ENCODE measurements at regions of chr1 and their contacts with region 1.

Region 1: DNA sequence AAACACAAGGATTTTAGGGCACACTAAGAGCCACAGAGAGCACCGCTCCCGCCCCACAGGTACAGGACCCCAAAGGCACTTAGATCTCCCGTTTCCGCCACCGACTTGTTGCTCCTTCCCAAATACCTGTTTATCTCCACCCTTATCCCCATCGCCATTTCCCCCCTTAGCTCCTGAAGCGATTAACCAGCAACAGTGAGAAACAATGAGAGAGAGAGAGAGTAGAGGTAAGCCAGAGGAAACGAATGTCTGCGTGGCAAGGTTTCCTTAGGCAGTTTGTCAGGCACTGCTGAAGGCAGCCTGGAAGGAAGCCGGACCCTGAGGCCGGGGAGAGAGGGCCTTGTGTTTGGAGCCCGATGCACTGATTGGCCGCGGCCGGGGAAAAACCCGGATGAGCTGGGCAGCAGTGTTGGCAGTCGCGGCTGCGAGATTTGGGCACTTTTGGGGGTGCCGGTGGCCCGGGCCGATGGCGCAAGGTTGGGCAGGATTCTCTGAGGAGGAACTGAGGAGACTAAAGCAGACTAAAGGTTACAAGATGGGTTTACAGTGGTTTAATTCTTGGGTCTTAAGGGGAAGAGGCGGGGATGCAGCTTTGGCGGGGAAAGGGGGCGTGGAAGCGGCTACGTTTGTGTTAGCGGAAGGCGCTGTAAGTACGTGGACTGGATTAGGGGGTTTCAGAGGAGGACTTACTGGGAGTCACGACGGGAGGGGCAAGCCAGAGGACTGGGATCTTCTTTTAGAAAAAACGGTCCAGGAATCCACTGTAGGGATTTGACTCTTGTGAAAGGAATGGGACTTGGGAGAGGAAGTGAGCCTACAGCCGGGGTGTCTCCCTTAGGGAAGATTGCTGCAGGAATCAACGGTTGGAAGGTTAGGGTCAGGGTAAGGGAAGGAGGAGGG is at the start of gene GORAB:
- DNase-seq: peak; percentile 81 to 84
- ATAC-seq: peak; percentile 98 to 99
- H3K4me3 ChIP-seq: peak within 1 kb of the TSS; percentile 68 to 86 (median 78)
- H3K27ac ChIP-seq: peak within 1 kb of the TSS; percentile 78 to 87 (median 82)
- H3K4me1 ChIP-seq: peaks cover 0 to 16% of the 10 kb centered on the region in 2 donors
- H3K27me3 ChIP-seq: no peaks in the 10 kb centered on the region
- CTCF ChIP-seq: no peak
- POLR2A ChIP-seq: peak; percentile 38 to 65
- total RNA-seq, gene GORAB: 1.7 to 3.8 (median 2.3) TPM

Region 2: DNA sequence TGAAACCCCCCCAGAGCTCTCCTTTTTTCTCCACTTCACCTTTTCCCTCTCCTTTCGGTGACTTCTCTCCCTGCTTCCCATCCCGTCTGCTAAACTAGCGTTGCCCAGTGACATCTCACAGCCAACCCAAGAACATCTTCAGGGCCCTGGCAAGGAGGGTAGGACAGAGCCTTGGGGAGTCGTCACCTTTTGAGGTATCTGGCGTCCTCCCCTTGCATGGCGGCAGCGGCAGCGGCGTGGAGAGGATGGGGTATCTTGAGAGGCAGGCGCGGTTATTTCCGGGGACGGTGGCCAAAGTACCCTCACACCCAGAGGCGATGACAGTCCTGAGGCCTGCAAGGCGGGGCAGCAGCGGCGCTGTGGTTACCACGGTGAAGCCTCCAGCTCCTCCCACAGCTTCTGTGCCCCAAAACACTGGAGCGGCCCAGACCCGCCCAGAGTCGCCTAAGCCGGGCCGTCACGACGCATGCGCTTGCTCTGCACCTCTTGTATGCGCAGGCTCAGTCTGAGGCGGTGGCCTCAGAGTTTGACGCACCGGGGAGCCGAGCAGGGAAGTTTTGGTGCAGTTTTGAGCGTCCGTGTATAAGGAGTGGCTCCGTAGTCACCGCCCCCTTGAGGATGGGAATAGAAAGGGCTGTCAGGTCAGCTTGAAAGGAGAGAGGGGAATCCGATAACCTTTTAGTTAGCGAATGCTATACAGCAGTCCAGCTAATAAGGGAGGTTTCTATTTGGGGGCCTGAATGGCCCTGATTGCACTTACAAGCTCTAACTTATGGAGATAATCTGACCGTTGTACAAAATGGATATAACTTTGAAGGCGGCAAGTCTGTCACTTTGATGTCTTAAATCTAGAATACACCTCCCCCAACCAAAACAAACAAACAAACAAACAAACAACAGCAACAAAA is 457.5 kb before region 1 on chr1 and contains the start of gene KIFAP3:
- in situ Hi-C with region 1: no loop called
- intact Hi-C with region 1: loop called (anchors 5 kb)
- DNase-seq: peak; percentile 94 to 96
- ATAC-seq: peak; percentile 98 to 99
- H3K4me3 ChIP-seq: peak within 1 kb of the TSS; percentile 74 to 88 (median 82)
- H3K27ac ChIP-seq: peak within 1 kb of the TSS; percentile 79 to 85 (median 82)
- H3K4me1 ChIP-seq: peaks cover 12 to 23% of the 10 kb centered on the region in 2 donors
- H3K27me3 ChIP-seq: no peaks in the 10 kb centered on the region
- CTCF ChIP-seq: peak; percentile 45 to 68 (median 60)
- POLR2A ChIP-seq: peak; percentile 31 to 68
- total RNA-seq, gene KIFAP3: 15.5 to 25.0 (median 18.0) TPM

Region 3: DNA sequence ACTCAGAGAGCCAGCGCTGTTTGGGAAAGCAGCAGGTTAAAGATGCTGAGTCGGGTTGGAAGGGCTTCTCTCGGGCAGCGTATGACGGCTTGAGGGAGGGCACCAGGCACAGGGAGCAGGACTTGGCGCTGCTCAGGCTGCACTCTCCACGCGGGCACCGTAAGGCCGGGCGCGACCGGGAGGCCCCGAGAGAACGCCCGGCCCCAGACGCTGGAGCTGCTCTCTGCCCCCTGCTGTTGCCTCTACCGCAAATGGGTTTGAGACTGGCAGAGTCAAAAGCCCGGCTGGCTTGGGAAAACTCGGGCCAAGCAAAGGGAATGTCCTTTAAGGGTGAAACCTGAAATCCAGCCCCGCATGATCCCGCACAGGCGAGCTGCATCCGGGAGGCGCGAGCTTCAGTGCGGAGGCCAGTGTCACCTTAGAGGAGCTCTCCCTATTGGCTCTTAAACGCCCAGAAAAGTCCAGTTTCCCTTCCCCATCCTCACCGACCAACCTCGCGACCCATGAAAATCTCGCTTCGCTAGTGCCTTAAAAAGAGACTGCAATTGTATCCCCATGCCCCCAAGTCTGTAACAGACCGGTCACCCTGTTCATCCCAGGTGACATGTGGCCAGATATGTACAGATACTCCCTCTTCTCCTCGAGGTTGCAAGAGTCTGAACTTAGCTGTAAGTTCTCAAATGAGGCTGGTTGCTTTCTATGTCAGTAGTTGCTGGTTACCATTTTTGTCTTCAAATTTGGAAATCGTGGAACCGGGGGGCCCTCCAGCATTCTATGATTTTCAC is 133.0 kb after region 1 on chr1:
- in situ Hi-C with region 1: no loop called
- intact Hi-C with region 1: loop called (anchors 2 kb)
- DNase-seq: peak in 1 of 2 donors; percentile 61
- ATAC-seq: peak; percentile 33 to 42
- H3K4me3 ChIP-seq: peak overlapping the region; percentile 82 to 93 (median 88)
- H3K27ac ChIP-seq: peak overlapping the region; percentile 90 to 100 (median 96)
- H3K4me1 ChIP-seq: peaks cover 26 to 40% of the 10 kb centered on the region in 2 donors
- H3K27me3 ChIP-seq: no peaks in the 10 kb centered on the region
- CTCF ChIP-seq: no peak
- POLR2A ChIP-seq: peak; percentile 38 to 44

Region 4: GRCh38 chr1:170929835-170930554 is 398.0 kb after region 1 on chr1:
- in situ Hi-C with region 1: no loop called
- intact Hi-C with region 1: loop called (anchors 5 kb)
- DNase-seq: no peak
- ATAC-seq: peak; percentile 87 to 92
- H3K4me3 ChIP-seq: no peak overlapping the region
- H3K27ac ChIP-seq: no peak overlapping the region
- H3K4me1 ChIP-seq: no peaks in the 10 kb centered on the region
- H3K27me3 ChIP-seq: no peaks in the 10 kb centered on the region
- CTCF ChIP-seq: peak in 4 of 5 experiments; percentile 35 to 76 (median 64)
- POLR2A ChIP-seq: no peak

Measured in gastrocnemius medialis (tissue), 4 donors.